Right ventricle myocardium inferior (tissue), 1 donor: ENCODE measurements at regions of chr22 and their contacts with region 1.

Region 1: GRCh38 chr22:40024201-40025061 is 29.7 kb downstream of the FAM83F start:
- DNase-seq: peak; percentile 78
- ATAC-seq: peak; percentile 66

Region 2: DNA sequence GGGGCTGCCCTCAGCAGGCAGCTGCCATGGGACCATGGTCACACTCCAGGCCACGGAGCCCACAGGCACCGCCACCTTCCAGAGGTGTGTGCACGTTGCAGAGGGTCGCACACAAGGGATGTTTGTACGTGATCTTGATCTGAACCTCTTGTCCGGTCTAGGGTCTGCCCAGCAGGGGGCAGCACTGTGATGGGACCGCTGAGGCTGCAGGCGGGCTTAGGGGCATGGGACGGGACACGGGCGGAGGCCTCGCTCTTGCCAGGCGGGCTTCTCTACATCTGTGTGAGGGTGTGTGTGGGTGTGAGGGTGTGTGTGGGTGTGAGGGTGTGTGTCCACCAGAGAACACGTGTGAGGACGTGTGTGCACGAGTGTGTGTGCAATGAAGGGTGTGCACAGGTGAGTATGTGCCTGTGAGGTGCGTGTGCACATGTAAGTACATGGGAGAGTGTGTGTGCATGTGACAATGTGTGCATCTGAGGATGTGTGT is 401.5 kb before region 1 on chr22:
- intact Hi-C with region 1: loop called (anchors 2 kb)
- DNase-seq: peak; percentile 78
- ATAC-seq: peak; percentile 38